ENCODE measurements at regions of chr6 and their contacts with region 1.

Region 1: GRCh38 chr6:22828179-22829062 is 259.1 kb downstream of the HDGFL1 start:
- DNase-seq: peak; percentile 99
- H3K4me3 ChIP-seq: peak overlapping the region in 1 of 3 experiments; percentile 36
- H3K27ac ChIP-seq: peak overlapping the region; percentile 96
- H3K4me1 ChIP-seq: peaks cover 31% of the 10 kb centered on the region
- H3K27me3 ChIP-seq: no peaks in the 10 kb centered on the region
- CTCF ChIP-seq: peak; percentile 85 to 95
- POLR2A ChIP-seq: no peak

Region 2: DNA sequence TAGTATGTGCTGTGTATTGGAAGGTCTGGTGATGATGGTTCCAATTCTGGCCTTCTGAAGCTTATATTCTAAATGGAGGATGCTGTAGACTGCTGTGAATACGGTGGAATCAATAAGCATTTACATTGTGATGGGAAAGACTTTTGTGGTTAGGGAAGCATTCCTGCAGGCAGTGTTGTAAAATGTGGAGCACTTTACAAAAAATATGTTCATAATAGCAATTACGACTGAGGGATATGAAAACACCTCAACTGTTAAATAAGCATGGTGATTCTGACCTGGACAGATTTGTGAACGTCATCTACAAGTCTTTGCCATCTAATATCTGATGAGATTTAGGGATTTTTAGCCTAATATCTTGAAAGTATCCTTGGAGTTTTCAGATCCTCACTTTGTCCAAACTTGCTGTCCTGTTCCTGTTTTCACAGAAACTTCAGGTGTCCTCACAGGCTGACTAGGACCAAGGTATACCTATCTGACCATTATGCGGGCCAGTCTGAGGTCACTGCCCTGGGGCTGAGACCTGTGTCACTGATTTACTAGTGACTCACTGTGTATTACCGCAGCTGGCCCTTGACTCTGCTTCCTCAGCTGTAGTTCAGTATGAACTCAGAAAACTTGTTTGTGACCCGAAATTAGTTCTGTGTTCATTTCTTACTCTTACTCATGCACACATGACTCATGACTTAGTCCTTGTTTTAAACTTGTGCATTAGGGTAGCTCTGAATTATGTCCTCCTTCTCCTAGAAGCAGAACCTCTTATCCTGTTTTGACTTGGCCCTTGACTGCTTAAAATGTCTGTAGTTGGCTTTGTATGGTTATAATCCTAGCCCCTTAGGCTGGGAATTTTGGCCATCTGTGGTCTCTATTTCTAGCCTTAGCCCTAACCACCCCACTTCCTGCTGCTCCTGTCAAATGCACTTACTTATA is 1951.1 kb before region 1 on chr6:
- CTCF ChIA-PET with region 1: no interaction called
- POLR2A ChIA-PET with region 1: no interaction called
- dilution Hi-C with region 1: no loop called
- intact Hi-C with region 1: loop called (anchors 5 kb)
- DNase-seq: peak; percentile 94
- H3K4me3 ChIP-seq: no peak overlapping the region
- H3K27ac ChIP-seq: peak overlapping the region; percentile 85
- H3K4me1 ChIP-seq: peaks cover 38% of the 10 kb centered on the region
- H3K27me3 ChIP-seq: no peaks in the 10 kb centered on the region
- CTCF ChIP-seq: no peak
- POLR2A ChIP-seq: peak; percentile 8

Region 3: GRCh38 chr6:21769405-21769861 is 1059.0 kb before region 1 on chr6:
- CTCF ChIA-PET with region 1: interaction called, 3 read pairs
- POLR2A ChIA-PET with region 1: no interaction called
- dilution Hi-C with region 1: no loop called
- intact Hi-C with region 1: loop called (anchors 1 kb)
- DNase-seq: peak; percentile 94
- H3K4me3 ChIP-seq: no peak overlapping the region
- H3K27ac ChIP-seq: peak overlapping the region; percentile 98
- H3K4me1 ChIP-seq: peaks cover 53% of the 10 kb centered on the region
- H3K27me3 ChIP-seq: no peaks in the 10 kb centered on the region
- CTCF ChIP-seq: no peak
- POLR2A ChIP-seq: no peak

Region 4: GRCh38 chr6:22113026-22113766 is 715.2 kb before region 1 on chr6:
- CTCF ChIA-PET with region 1: no interaction called
- POLR2A ChIA-PET with region 1: no interaction called
- dilution Hi-C with region 1: no loop called
- intact Hi-C with region 1: loop called (anchors 1 kb)
- DNase-seq: peak; percentile 98
- H3K4me3 ChIP-seq: no peak overlapping the region
- H3K27ac ChIP-seq: peak overlapping the region; percentile 75
- H3K4me1 ChIP-seq: peaks cover 21% of the 10 kb centered on the region
- H3K27me3 ChIP-seq: no peaks in the 10 kb centered on the region
- CTCF ChIP-seq: no peak
- POLR2A ChIP-seq: no peak

Region 5: GRCh38 chr6:22448291-22448711 is 380.1 kb before region 1 on chr6:
- CTCF ChIA-PET with region 1: no interaction called
- POLR2A ChIA-PET with region 1: no interaction called
- dilution Hi-C with region 1: no loop called
- intact Hi-C with region 1: loop called (anchors 1 kb)
- DNase-seq: peak; percentile 98
- H3K4me3 ChIP-seq: no peak overlapping the region
- H3K27ac ChIP-seq: peak overlapping the region; percentile 85
- H3K4me1 ChIP-seq: peaks cover 49% of the 10 kb centered on the region
- H3K27me3 ChIP-seq: no peaks in the 10 kb centered on the region
- CTCF ChIP-seq: no peak
- POLR2A ChIP-seq: no peak

Region 6: DNA sequence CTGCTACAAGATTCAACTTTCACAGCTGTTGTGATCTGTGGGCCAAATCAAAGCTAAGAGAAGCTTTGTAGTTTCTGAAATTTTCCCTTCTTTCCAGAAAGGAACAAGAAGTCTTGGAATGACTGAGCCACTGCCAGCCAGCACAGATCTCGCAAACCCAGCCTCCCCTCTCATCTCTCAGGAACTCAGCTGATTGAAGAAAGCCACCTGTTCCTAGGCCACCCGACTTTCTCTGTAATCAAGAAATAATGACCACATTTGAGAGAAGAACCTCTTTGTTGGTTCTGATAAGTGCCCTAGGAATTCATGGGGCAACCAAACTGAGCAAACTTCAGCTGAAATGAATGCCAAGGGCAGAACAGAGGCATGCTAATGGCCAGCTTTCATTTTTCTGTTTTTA is 197.3 kb before region 1 on chr6:
- CTCF ChIA-PET with region 1: no interaction called
- POLR2A ChIA-PET with region 1: no interaction called
- dilution Hi-C with region 1: no loop called
- intact Hi-C with region 1: no loop called
- DNase-seq: no peak
- H3K4me3 ChIP-seq: no peak overlapping the region
- H3K27ac ChIP-seq: no peak overlapping the region
- H3K4me1 ChIP-seq: no peaks in the 10 kb centered on the region
- H3K27me3 ChIP-seq: no peaks in the 10 kb centered on the region
- CTCF ChIP-seq: no peak
- POLR2A ChIP-seq: no peak

Region 7: GRCh38 chr6:22808466-22808865 is 20.0 kb before region 1 on chr6:
- CTCF ChIA-PET with region 1: no interaction called
- POLR2A ChIA-PET with region 1: no interaction called
- dilution Hi-C with region 1: no loop called
- intact Hi-C with region 1: no loop called
- DNase-seq: peak; percentile 71
- H3K4me3 ChIP-seq: no peak overlapping the region
- H3K27ac ChIP-seq: no peak overlapping the region
- H3K4me1 ChIP-seq: no peaks in the 10 kb centered on the region
- H3K27me3 ChIP-seq: no peaks in the 10 kb centered on the region
- CTCF ChIP-seq: no peak
- POLR2A ChIP-seq: no peak

Region 8: DNA sequence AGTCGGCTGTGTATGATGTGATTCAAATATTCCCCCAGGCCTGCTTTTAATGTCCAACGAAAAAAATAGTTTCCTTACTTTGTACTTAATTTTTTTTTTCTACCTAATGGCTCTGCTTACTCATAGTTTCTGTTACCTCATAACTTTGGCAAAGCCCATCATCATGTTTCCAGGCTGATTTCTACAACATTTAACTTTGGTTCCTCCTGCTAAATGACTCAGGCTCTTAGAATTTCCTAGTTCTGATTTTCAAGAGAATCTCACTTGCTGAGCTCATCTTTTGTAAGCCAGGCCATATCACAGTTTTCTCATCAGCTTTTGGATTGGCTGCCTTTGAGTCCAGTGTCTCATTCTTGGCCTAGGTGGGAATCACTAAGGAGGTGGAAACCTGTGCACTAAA is 64.0 kb after region 1 on chr6:
- CTCF ChIA-PET with region 1: interaction called, 12 read pairs
- POLR2A ChIA-PET with region 1: no interaction called
- dilution Hi-C with region 1: no loop called
- intact Hi-C with region 1: loop called (anchors 2 kb)
- DNase-seq: peak; percentile 96
- H3K4me3 ChIP-seq: no peak overlapping the region
- H3K27ac ChIP-seq: peak overlapping the region; percentile 95
- H3K4me1 ChIP-seq: peaks cover 28% of the 10 kb centered on the region
- H3K27me3 ChIP-seq: no peaks in the 10 kb centered on the region
- CTCF ChIP-seq: no peak
- POLR2A ChIP-seq: peak; percentile 19

Measured in endothelial cell of umbilical vein (primary cell).